Aorta (tissue), 5 donors: ENCODE measurements at regions of chr5 and their contacts with region 1.

Region 1: GRCh38 chr5:6291961-6292360 is 86.4 kb downstream of the MED10 start:
- DNase-seq: no peak
- ATAC-seq: no peak
- H3K4me3 ChIP-seq: no peak overlapping the region
- H3K27ac ChIP-seq: no peak overlapping the region
- H3K4me1 ChIP-seq: no peaks in the 10 kb centered on the region
- H3K27me3 ChIP-seq: no peaks in the 10 kb centered on the region

Region 2: DNA sequence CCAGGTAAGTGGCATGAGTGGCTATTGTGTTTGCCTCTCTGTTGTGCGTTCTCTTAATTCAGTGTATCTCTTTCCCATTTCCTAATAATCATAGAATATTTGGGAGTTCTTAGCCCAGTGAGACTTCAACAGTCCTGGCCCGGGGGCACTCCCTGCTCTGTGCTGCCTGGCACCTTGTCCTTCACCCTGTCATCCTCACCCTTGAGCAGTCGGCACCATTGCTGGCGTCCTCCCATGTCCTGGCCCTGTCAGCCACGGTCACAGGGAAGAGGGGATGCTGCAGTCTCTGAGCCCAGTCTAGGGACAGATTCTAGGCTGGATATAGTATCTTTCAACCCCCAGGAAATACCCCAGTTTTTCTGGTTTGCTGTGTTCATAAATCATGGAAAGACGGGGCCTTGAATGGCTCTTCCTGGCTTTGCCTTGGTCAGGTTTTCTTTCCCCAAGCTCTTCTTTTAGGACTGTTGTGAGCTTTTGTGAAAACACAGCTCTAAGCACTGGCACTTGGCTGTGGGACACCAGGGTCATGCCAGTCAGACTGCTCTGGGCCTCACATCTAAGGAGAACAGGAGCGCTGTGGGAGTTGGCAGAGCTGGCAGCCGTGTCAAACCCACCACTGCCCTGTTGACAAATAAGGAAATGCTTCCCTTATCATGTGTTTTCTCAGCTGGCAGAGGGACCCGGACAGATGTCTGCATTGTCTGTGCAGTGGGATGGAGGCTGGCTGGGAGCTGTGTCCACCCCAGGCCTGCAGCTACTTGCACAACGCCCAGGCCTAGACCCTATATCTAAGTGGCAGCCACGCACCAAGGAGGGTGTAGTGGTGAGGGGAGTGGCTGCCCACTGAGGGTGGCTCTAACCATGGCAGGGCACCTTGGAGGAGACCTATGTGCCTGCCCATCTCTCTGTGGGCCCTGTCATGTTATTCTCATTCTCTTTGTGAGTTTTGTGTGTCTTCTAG is 490.9 kb before region 1 on chr5:
- intact Hi-C with region 1: no loop called
- DNase-seq: no peak
- ATAC-seq: no peak
- H3K4me3 ChIP-seq: no peak overlapping the region
- H3K27ac ChIP-seq: no peak overlapping the region
- H3K4me1 ChIP-seq: no peaks in the 10 kb centered on the region
- H3K27me3 ChIP-seq: no peaks in the 10 kb centered on the region

Region 3: DNA sequence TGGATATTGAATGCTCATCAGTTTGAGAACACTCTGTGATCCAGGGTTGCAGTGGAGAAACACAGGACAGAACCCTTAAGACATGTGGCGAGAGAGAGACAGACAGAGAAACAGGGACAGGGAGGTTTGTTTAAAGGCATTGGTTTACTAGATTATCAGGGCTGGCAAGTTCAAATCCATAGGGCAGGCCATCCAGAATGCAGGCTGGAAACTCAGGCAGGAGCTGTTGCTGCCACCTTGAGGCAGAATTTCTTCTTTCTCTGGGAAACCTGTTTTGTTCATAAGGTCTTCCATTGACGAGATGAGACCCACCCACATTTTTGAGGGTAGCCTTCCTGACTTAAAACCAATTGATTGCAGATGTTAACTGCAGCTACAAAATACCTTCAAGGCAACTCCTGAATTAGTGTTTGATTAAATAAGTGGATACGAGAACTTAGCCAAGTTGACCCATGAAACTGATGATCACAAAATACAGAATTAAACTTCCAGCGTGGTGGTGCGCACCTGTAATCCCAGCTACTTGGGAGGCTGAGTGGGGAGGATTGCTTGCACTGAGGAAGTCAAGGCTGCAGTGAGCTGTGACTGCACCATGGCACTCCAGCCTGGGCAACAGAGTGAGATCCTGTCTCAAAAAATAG is 285.0 kb after region 1 on chr5:
- intact Hi-C with region 1: loop called in 1 of 2 experiments (anchors 2 kb)
- DNase-seq: no peak
- ATAC-seq: peak; percentile 15
- H3K4me3 ChIP-seq: no peak overlapping the region
- H3K27ac ChIP-seq: no peak overlapping the region
- H3K4me1 ChIP-seq: no peaks in the 10 kb centered on the region
- H3K27me3 ChIP-seq: no peaks in the 10 kb centered on the region